ENCODE measurements at regions of chr17 and their contacts with region 1.

Region 1: DNA sequence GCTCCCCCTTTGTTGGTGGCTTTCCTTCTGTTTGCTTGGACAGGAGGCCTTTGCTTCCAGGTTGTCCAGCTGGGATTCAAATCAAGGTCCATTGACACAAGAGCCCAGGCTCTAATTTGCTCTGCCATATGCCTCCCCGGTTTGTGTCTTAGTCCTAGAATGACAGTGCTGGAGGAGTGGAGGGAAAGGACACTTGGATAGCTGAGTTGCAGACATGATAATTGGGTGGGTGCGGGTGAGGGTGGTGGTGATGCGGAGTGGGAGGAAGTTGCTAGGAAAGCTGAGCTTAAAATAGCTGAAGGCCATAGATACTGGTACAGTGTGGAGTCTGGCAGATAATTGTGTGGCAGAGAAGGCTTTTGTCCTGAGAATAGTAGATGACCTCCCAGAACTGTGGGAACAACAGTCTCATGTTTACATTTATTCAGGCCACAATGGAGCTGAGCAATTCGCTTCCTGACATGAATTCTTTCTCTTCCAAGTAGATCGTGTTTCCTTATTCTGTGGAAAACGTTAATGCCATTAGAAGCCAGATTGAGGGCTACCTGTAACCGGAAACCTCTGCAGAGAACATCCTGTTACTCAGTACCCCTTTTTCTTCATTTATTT is 23.8 kb downstream of the SEC14L1 start:
- DNase-seq: no peak
- H3K4me3 ChIP-seq: no peak overlapping the region
- CTCF ChIP-seq: no peak
- POLR2A ChIP-seq: no peak

Region 2: DNA sequence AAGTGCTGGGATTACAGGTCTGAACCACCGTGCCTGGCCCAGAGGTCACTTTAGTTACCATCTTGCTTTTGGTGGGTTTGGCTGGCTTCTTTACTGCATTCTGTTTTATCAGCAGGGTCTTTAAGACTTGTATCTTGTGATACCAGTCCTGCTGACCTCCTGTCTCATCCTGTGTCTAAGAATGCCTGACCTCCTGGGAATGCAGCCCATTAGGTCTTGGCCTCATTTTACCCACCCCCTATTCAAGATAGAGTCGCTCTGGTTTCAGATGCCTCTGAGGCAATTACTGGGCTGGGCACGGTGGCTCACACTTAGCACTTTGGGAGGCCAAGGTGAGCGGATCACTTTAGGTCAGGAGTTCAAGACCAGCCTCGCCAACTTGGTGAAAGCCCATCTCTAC is 362.9 kb before region 1 on chr17:
- intact Hi-C with region 1: loop called (anchors 5 kb)
- DNase-seq: no peak
- H3K4me3 ChIP-seq: no peak overlapping the region
- CTCF ChIP-seq: no peak
- POLR2A ChIP-seq: no peak

Measured in lower leg skin (tissue), 4 donors.